ENCODE measurements at regions of chr1 and their contacts with region 1.

Region 1: DNA sequence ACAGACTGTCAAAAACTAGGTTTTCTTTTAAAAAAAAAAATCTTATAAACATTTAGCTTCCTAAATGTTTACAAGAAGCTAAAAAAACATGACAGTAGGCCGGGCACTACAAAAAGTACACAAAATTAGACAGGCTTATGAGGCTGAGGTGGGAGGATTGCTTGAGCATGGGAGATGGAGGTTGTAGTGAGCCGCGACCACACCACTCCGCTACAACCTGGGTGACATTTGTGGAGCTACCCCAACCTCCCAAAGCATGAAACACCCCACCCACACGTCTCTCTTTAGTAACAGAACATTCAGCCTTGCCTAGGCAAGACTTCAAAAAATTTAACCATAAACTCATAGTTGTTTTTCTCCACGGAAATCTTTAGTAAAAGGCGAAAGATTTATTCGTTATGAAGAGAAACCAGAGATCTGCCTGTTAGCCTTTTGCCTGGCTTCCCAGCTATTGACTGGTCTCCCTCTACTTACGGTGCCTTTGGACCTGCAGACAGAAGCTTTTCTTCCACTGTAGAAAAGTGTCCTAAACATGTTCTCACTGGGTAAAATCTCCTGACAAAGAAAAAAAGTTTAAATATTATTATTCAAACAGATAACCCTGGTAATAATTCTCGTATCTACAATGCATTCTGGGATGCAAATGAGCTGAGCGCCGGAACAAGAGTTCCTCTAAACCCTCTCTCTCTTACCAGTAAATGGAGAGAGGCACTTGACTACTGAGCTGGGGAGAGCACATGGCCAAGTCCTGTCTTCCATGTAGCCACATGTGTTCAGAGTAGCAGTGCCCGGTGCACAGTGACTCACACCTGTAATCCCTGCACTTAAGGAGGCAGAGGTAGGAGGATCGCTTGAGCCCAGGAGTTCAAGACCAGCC is 9.2 kb downstream of the RNU5D-1 start:
- DNase-seq: peak; percentile 85
- H3K4me3 Mint-ChIP-seq: peak overlapping the region; percentile 43
- H3K27ac Mint-ChIP-seq: peak overlapping the region; percentile 97
- H3K4me1 Mint-ChIP-seq: peaks cover 72% of the 10 kb centered on the region
- H3K27me3 Mint-ChIP-seq: no peaks in the 10 kb centered on the region

Region 2: DNA sequence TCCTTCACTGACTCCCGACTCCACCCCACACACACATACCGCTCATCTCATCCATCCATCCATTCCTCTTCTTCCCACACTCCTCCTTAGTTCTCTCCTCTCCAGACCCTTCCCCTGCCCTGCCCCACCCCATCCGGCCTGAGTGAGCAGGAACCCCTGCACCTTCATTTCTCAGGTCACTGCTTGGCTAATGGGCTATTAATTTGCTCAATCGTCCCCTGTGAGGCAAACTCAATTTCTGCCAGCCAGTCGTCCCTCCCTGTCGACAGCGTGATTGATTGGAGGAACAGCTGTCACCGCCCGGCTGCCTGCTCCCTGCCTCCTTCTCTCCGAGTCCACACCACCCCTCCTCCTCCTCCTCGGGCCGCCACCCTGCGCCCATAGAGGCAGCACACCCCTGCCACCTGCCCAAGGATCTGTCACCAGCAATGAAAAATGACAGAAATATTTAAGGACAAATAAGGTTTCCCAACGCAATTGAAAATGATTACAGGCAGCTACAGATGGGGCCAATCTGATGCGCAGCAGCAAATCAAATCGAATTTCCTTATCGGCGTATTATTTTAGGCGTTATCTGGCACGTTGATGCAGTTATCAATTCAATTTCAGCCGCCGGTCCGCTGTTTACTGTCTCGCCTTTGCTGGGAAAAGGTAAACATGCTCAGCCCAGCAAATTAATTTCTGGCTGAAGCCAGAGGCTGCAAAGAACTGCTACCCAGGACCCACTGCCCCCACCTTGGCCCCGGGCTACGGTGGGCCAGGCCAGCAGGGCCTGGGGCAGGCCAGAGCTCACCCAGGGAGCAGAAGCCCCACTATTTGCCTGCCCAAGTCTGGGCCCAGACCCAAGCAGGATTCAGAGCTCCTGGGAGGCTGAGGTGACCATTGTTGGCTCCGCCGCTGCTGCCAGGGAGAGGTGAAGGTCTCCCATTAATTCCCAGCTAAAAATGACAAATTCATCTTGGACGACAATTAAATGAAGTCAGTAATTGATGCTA is 118.8 kb before region 1 on chr1:
- CTCF ChIA-PET with region 1: no interaction called
- POLR2A ChIA-PET with region 1: no interaction called
- DNase-seq: no peak
- H3K4me3 Mint-ChIP-seq: no peak overlapping the region
- H3K27ac Mint-ChIP-seq: no peak overlapping the region
- H3K4me1 Mint-ChIP-seq: no peaks in the 10 kb centered on the region
- H3K27me3 Mint-ChIP-seq: no peaks in the 10 kb centered on the region

Region 3: DNA sequence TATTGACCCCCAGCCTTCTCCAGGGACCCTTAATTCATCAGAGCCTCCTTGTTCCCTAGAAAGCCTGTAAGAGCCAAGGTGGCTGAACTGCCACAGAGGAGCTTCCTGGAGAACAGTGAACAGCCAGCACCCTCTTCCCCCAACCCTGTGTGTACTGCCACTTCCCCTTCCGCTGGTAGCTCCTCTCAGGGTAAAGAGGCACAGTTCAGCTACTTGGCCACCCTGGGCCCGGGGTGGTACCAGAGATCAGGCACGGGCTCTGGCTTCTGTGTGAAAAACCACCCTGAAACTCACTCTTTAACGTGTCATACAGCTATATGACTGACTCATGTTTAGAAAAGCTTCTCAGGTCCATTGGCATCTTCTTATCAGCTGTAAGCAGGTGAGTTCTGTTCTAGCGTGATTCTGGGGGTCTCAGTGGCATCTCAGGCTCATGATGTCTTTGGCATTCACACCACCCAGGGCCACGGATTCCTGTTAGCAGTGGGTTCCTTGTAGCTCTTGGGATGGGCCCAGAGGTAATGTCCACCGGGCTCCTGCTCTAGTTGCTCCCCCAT is 24.9 kb before region 1 on chr1:
- CTCF ChIA-PET with region 1: interaction called, 8 read pairs
- POLR2A ChIA-PET with region 1: interaction called, 17 read pairs
- DNase-seq: peak; percentile 64
- H3K4me3 Mint-ChIP-seq: peak overlapping the region; percentile 25
- H3K27ac Mint-ChIP-seq: peak overlapping the region; percentile 86
- H3K4me1 Mint-ChIP-seq: peaks cover 20% of the 10 kb centered on the region
- H3K27me3 Mint-ChIP-seq: no peaks in the 10 kb centered on the region

Region 4: GRCh38 chr1:44799770-44800584 is 78.3 kb after region 1 on chr1 and contains the start of gene PLK3:
- CTCF ChIA-PET with region 1: interaction called, 6 read pairs
- POLR2A ChIA-PET with region 1: interaction called, 11 read pairs
- DNase-seq: peak; percentile 99
- H3K4me3 Mint-ChIP-seq: peak within 1 kb of the TSS; percentile 80
- H3K27ac Mint-ChIP-seq: peak within 1 kb of the TSS; percentile 100
- H3K4me1 Mint-ChIP-seq: peaks cover 44% of the 10 kb centered on the region
- H3K27me3 Mint-ChIP-seq: no peaks in the 10 kb centered on the region
- total RNA-seq, gene PLK3: 54.3 to 57.5 TPM

Region 5: GRCh38 chr1:44819608-44820327 is 98.0 kb after region 1 on chr1:
- CTCF ChIA-PET with region 1: interaction called, 6 read pairs
- POLR2A ChIA-PET with region 1: interaction called, 31 read pairs
- DNase-seq: peak; percentile 86
- H3K4me3 Mint-ChIP-seq: peak overlapping the region; percentile 87
- H3K27ac Mint-ChIP-seq: peak overlapping the region; percentile 100
- H3K4me1 Mint-ChIP-seq: peaks cover 48% of the 10 kb centered on the region
- H3K27me3 Mint-ChIP-seq: peaks cover 2% of the 10 kb centered on the region

Region 6: GRCh38 chr1:45339789-45340570 is 618.3 kb after region 1 on chr1 and contains the starts of genes MUTYH and TOE1:
- CTCF ChIA-PET with region 1: no interaction called
- POLR2A ChIA-PET with region 1: interaction called, 11 read pairs
- DNase-seq: peak; percentile 95
- H3K4me3 Mint-ChIP-seq: peak within 1 kb of the TSS; percentile 97
- H3K27ac Mint-ChIP-seq: peak within 1 kb of the TSS; percentile 98
- H3K4me1 Mint-ChIP-seq: peaks cover 55% of the 10 kb centered on the region
- H3K27me3 Mint-ChIP-seq: no peaks in the 10 kb centered on the region
- total RNA-seq, gene MUTYH: 51.7 to 55.1 TPM
- total RNA-seq, gene TOE1: 22.6 to 34.4 TPM

Measured in activated CD4-positive, alpha-beta T cell treated with anti-CD3 and anti-CD28 coated beads, Interleukin-2, amount 10 ng/mL, durations not matched to agents 7 days and 5 days (primary cell).